CD4-positive, alpha-beta T cell (primary cell): ENCODE measurements at regions of chr11 and their contacts with region 1.

Region 1: GRCh38 chr11:14764579-14765527 is 121.2 kb downstream of the PDE3B start:
- DNase-seq: peak in 8 of 14 experiments; percentile 9 to 95 (median 48)
- ATAC-seq: peak; percentile 81
- H3K4me3 ChIP-seq: peak overlapping the region; percentile 2
- H3K4me3 Mint-ChIP-seq: peak overlapping the region; percentile 49
- H3K27ac ChIP-seq: peak overlapping the region; percentile 41 to 54
- H3K27ac Mint-ChIP-seq: no peak overlapping the region
- H3K4me1 ChIP-seq: peaks cover 14% of the 10 kb centered on the region
- H3K4me1 Mint-ChIP-seq: peaks cover 47% of the 10 kb centered on the region
- H3K27me3 ChIP-seq: no peaks in the 10 kb centered on the region
- H3K27me3 Mint-ChIP-seq: no peaks in the 10 kb centered on the region
- CTCF ChIP-seq: no peak

Region 2: DNA sequence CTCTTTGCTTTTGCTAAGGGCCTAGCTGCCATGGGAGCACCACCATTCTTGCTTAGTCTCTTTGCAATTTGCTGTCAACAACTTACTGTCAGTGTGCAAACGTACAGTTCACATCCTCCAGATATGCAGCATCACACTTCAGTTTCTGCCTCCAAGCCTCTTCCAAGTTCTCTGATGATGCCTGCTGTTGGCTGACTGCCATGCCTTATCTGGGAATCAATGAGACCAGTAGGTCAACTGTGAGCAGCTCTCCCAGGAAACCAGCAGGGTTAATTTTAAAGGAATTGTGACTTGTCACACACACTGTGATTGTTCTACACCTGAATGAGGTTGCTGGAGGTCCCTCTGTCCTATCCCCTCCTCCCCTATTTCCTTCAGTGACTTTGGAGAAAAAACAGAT is 321.2 kb before region 1 on chr11:
- CTCF ChIA-PET with region 1: no interaction called
- POLR2A ChIA-PET with region 1: no interaction called
- intact Hi-C with region 1: no loop called
- DNase-seq: no peak
- ATAC-seq: no peak
- H3K4me3 ChIP-seq: no peak overlapping the region
- H3K4me3 Mint-ChIP-seq: no peak overlapping the region
- H3K27ac ChIP-seq: no peak overlapping the region
- H3K27ac Mint-ChIP-seq: no peak overlapping the region
- H3K4me1 ChIP-seq: peaks cover 12% of the 10 kb centered on the region
- H3K4me1 Mint-ChIP-seq: peaks cover 18% of the 10 kb centered on the region
- H3K27me3 ChIP-seq: no peaks in the 10 kb centered on the region
- H3K27me3 Mint-ChIP-seq: no peaks in the 10 kb centered on the region
- CTCF ChIP-seq: no peak

Region 3: GRCh38 chr11:14519917-14520746 is 244.7 kb before region 1 on chr11 and contains the start of gene PSMA1:
- CTCF ChIA-PET with region 1: no interaction called
- POLR2A ChIA-PET with region 1: interaction called, 25 read pairs
- intact Hi-C with region 1: loop called in 1 of 2 experiments (anchors 1 kb)
- DNase-seq: peak; percentile 79 to 95 (median 87)
- ATAC-seq: peak; percentile 90
- H3K4me3 ChIP-seq: peak within 1 kb of the TSS; percentile 74
- H3K4me3 Mint-ChIP-seq: peak within 1 kb of the TSS; percentile 96
- H3K27ac ChIP-seq: peak within 1 kb of the TSS; percentile 81 to 83
- H3K27ac Mint-ChIP-seq: peak within 1 kb of the TSS; percentile 94
- H3K4me1 ChIP-seq: peaks cover 14% of the 10 kb centered on the region
- H3K4me1 Mint-ChIP-seq: peaks cover 37% of the 10 kb centered on the region
- H3K27me3 ChIP-seq: no peaks in the 10 kb centered on the region
- H3K27me3 Mint-ChIP-seq: no peaks in the 10 kb centered on the region
- CTCF ChIP-seq: peak; percentile 36
- total RNA-seq, gene PSMA1: 170 to 175 TPM

Region 4: DNA sequence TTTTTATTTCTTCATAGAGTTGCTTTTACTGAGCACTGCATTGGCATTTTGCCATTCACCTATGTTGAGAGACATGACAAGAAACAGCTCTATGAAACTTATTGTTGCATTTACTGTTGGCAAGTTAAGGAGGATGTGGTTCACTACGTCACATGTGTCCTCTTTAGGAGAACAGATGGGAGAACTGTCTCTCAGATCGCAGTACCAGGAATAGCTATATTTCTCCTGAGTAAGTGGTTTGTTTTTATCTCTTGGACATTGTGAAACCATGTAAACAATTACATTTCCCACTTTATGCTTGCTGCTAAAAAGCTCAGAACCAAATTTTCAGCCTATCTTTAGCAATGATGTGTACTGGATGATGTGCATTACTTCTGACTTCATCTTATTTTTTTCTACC is 209.9 kb before region 1 on chr11:
- CTCF ChIA-PET with region 1: no interaction called
- POLR2A ChIA-PET with region 1: interaction called, 13 read pairs
- intact Hi-C with region 1: loop called in 1 of 2 experiments (anchors 5 kb)
- DNase-seq: peak in 8 of 14 experiments; percentile 7 to 89 (median 46)
- ATAC-seq: peak; percentile 90
- H3K4me3 ChIP-seq: no peak overlapping the region
- H3K4me3 Mint-ChIP-seq: peak overlapping the region; percentile 56
- H3K27ac ChIP-seq: peak overlapping the region; percentile 35 to 51
- H3K27ac Mint-ChIP-seq: peak overlapping the region; percentile 92
- H3K4me1 ChIP-seq: peaks cover 3% of the 10 kb centered on the region
- H3K4me1 Mint-ChIP-seq: peaks cover 47% of the 10 kb centered on the region
- H3K27me3 ChIP-seq: no peaks in the 10 kb centered on the region
- H3K27me3 Mint-ChIP-seq: no peaks in the 10 kb centered on the region
- CTCF ChIP-seq: no peak

Region 5: DNA sequence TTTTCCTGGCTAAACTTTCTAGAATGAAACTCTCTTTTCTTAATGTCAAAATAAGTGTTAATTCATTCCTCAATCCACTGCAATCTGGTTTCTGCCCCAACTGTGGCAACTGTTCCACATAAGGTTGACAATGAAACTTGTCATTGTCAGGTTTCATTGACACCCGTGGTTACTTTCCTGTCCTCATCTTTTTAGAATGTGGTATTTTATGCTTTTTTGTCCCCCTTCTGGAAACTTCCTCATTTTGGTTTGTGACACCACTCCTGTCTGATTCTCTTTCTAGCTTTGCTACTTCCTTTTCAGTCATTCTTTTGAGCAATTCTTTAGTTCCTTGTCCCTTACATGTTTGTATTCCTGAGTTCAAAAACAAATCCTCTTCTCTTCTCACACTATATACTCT is 128.7 kb before region 1 on chr11:
- CTCF ChIA-PET with region 1: interaction called, 4 read pairs
- POLR2A ChIA-PET with region 1: interaction called, 14 read pairs
- intact Hi-C with region 1: loop called in 1 of 2 experiments (anchors 5 kb)
- DNase-seq: peak in 3 of 14 experiments; percentile 38 to 66 (median 39)
- ATAC-seq: peak; percentile 25
- H3K4me3 ChIP-seq: no peak overlapping the region
- H3K4me3 Mint-ChIP-seq: peak overlapping the region; percentile 26
- H3K27ac ChIP-seq: no peak overlapping the region
- H3K27ac Mint-ChIP-seq: peak overlapping the region; percentile 62
- H3K4me1 ChIP-seq: peaks cover 15% of the 10 kb centered on the region
- H3K4me1 Mint-ChIP-seq: peaks cover 72% of the 10 kb centered on the region
- H3K27me3 ChIP-seq: no peaks in the 10 kb centered on the region
- H3K27me3 Mint-ChIP-seq: no peaks in the 10 kb centered on the region
- CTCF ChIP-seq: no peak

Region 6: DNA sequence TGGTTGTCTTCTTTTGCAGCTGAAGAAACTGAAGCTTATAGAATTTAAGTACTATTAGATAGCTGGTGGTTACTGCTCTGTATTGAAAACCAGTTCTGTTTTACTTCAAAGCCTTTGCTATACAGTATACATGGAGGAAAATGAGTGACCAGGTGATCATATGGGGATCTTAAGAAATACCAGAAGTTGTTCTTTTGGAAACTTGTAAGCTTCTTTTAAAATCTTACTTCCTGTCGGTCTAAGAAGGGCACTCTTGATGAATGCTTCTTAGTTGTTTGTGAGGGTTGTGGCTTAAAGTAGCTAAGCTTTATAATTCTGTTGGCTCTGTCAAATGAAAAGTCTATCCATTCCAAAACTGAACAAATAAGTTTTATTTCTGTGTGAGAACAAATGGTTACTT is 66.1 kb before region 1 on chr11:
- CTCF ChIA-PET with region 1: no interaction called
- POLR2A ChIA-PET with region 1: interaction called, 13 read pairs
- intact Hi-C with region 1: no loop called
- DNase-seq: no peak
- ATAC-seq: no peak
- H3K4me3 ChIP-seq: no peak overlapping the region
- H3K4me3 Mint-ChIP-seq: peak overlapping the region; percentile 18
- H3K27ac ChIP-seq: no peak overlapping the region
- H3K27ac Mint-ChIP-seq: peak overlapping the region; percentile 37
- H3K4me1 ChIP-seq: peaks cover 3% of the 10 kb centered on the region
- H3K4me1 Mint-ChIP-seq: peaks cover 70% of the 10 kb centered on the region
- H3K27me3 ChIP-seq: no peaks in the 10 kb centered on the region
- H3K27me3 Mint-ChIP-seq: no peaks in the 10 kb centered on the region
- CTCF ChIP-seq: no peak

Region 7: DNA sequence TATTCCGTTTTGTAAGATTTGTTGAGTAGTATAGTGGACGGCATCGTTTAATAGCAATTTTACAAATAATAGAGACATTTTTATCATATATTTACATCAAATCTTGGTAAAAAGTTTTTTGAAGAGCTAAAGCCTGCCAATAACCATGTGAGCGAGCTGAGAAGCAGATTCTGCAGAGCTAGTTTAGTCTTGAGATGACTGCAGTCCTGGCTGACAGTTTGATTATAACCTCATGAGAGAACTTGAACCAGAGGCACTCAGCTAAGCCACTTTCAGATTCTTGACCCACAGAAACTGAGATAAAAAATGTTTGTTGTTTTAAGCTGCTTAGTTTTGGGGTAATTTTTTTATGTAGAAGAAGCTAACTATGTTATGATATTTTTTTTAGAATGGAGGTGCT is 42.4 kb before region 1 on chr11:
- CTCF ChIA-PET with region 1: interaction called, 3 read pairs
- POLR2A ChIA-PET with region 1: interaction called, 12 read pairs
- intact Hi-C with region 1: loop called (anchors 5 kb)
- DNase-seq: no peak
- ATAC-seq: no peak
- H3K4me3 ChIP-seq: no peak overlapping the region
- H3K4me3 Mint-ChIP-seq: no peak overlapping the region
- H3K27ac ChIP-seq: no peak overlapping the region
- H3K27ac Mint-ChIP-seq: no peak overlapping the region
- H3K4me1 ChIP-seq: no peaks in the 10 kb centered on the region
- H3K4me1 Mint-ChIP-seq: peaks cover 40% of the 10 kb centered on the region
- H3K27me3 ChIP-seq: no peaks in the 10 kb centered on the region
- H3K27me3 Mint-ChIP-seq: no peaks in the 10 kb centered on the region
- CTCF ChIP-seq: no peak

Region 8: GRCh38 chr11:14892036-14892567 is 127.2 kb after region 1 on chr11 and contains the start of gene CYP2R1:
- CTCF ChIA-PET with region 1: interaction called, 6 read pairs
- POLR2A ChIA-PET with region 1: interaction called, 26 read pairs
- intact Hi-C with region 1: loop called in 1 of 2 experiments (anchors 5 kb)
- DNase-seq: peak; percentile 79 to 95 (median 86)
- ATAC-seq: peak; percentile 82
- H3K4me3 ChIP-seq: peak within 1 kb of the TSS; percentile 94
- H3K4me3 Mint-ChIP-seq: peak within 1 kb of the TSS; percentile 96
- H3K27ac ChIP-seq: peak within 1 kb of the TSS; percentile 81 to 88
- H3K27ac Mint-ChIP-seq: peak within 1 kb of the TSS; percentile 94
- H3K4me1 ChIP-seq: peaks cover 31% of the 10 kb centered on the region
- H3K4me1 Mint-ChIP-seq: peaks cover 35% of the 10 kb centered on the region
- H3K27me3 ChIP-seq: no peaks in the 10 kb centered on the region
- H3K27me3 Mint-ChIP-seq: no peaks in the 10 kb centered on the region
- CTCF ChIP-seq: no peak
- total RNA-seq, gene CYP2R1: 14.2 to 15.8 TPM